ENCODE measurements at regions of chr18 and their contacts with region 1.

Region 1: GRCh38 chr18:39414009-39414700 is 1848.6 kb upstream of the CELF4 start:
- DNase-seq: no peak
- CTCF ChIP-seq: no peak

Region 2: GRCh38 chr18:39318008-39318407 is 96.1 kb before region 1 on chr18:
- in situ Hi-C with region 1: loop called (anchors 25 kb)
- DNase-seq: no peak
- CTCF ChIP-seq: no peak

Region 3: GRCh38 chr18:39753178-39753577 is 339.0 kb after region 1 on chr18:
- in situ Hi-C with region 1: no loop called
- DNase-seq: no peak
- CTCF ChIP-seq: no peak

Region 4: DNA sequence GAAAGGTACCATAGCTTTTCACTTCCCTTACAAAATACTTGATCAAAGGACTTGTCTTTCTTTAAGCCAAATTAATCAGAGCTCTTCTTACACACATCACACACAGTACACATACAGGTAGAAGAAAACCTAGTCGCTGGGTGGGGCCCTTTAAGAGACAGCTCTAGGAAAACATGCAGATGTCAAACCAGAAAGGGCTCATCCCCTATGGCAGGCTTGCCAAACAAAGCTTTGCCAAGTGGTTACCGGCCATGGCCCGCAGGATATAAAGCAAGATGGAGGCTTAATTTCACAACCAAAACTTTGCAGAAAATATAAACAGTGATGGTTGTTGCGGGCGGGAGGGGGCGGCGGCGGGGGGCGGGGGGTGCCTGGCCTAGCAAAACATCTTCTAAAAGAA is 384.9 kb after region 1 on chr18:
- in situ Hi-C with region 1: no loop called
- DNase-seq: no peak
- CTCF ChIP-seq: no peak

Measured in GM13977 (cell line).